Esophagus muscularis mucosa (tissue), 4 donors: ENCODE measurements at regions of chr19 and their contacts with region 1.

Region 1: GRCh38 chr19:4638828-4639530 is at the start of gene TNFAIP8L1:
- DNase-seq: peak; percentile 99
- H3K4me3 ChIP-seq: peak within 1 kb of the TSS; percentile 78 to 88 (median 82)
- H3K27ac ChIP-seq: peak within 1 kb of the TSS; percentile 71 to 83 (median 82)
- H3K4me1 ChIP-seq: peaks cover 27 to 62% (median 53%) of the 10 kb centered on the region in 4 donors
- H3K27me3 ChIP-seq: peaks cover 0 to 8% (median 3%) of the 10 kb centered on the region in 4 donors
- CTCF ChIP-seq: no peak
- EP300 ChIP-seq: no peak
- POLR2A ChIP-seq: no peak
- total RNA-seq, gene TNFAIP8L1: 5.5 to 16.5 (median 13.2) TPM

Region 2: GRCh38 chr19:4557971-4558941 is 80.7 kb before region 1 on chr19:
- intact Hi-C with region 1: loop called (anchors 5 kb)
- DNase-seq: no peak
- H3K4me3 ChIP-seq: peak overlapping the region; percentile 35 to 55 (median 42)
- H3K27ac ChIP-seq: peak overlapping the region in 2 of 4 donors; percentile 37 to 62
- H3K4me1 ChIP-seq: peaks cover 5 to 14% (median 8%) of the 10 kb centered on the region in 4 donors
- H3K27me3 ChIP-seq: peaks cover 0 to 10% (median 0%) of the 10 kb centered on the region in 4 donors
- CTCF ChIP-seq: peak; percentile 94 to 100 (median 99)
- EP300 ChIP-seq: no peak
- POLR2A ChIP-seq: peak; percentile 9

Region 3: DNA sequence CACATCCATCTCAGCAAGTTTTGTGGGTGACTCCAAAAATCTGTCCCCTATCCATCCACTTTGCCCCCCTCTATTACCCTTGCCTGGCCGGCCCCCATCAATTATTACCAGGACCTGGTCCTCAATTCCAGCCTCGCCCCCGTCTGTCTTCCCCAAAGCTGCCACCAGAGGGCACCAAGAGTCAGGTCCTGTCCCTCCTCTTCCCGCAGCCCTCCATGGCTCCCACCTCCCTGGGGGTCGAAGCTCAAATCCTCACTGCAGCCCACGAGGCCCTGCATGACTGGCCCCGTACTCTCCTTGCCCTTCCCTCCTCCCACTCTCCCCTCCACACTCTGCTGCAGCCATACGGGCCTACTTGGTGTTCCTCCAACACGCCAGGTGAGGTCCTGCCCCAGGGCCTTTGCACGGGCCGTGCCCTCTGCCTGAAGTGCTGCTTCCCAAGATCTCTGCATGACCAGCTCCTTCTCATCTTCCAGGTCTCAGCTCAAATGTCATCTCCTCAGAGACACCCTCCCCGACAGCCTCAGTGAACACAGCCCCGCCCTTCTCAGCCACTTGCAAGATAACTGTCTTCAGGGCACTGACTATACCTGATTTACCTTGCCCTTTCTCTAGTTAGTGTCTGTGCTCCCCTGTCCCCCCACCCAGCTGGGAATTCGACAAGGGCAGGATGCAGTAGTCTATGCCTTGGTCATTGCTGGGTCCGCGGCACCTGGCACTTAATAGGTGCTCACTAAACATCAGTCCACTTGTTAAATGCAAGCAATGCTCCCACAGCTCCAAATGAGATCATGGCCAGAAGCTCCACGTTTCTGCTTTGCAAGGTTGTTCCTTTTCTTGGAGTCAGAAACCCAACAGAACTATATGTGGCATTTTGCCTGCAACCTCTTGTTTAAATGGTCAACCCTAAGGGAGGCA is 62.7 kb before region 1 on chr19:
- intact Hi-C with region 1: loop called (anchors 5 kb)
- DNase-seq: no peak
- H3K4me3 ChIP-seq: no peak overlapping the region
- H3K27ac ChIP-seq: peak overlapping the region; percentile 54 to 68 (median 59)
- H3K4me1 ChIP-seq: peaks cover 13 to 32% (median 23%) of the 10 kb centered on the region in 4 donors
- H3K27me3 ChIP-seq: peaks cover 4 to 89% (median 32%) of the 10 kb centered on the region in 4 donors
- CTCF ChIP-seq: peak; percentile 40 to 70 (median 52)
- EP300 ChIP-seq: no peak
- POLR2A ChIP-seq: no peak